ENCODE measurements at regions of chr3 and their contacts with region 1.

Region 1: GRCh38 chr3:26574766-26575165 is 47.8 kb upstream of the LRRC3B start:
- DNase-seq: no peak
- ATAC-seq: no peak

Region 2: GRCh38 chr3:26703519-26703918 is 128.8 kb after region 1 on chr3:
- intact Hi-C with region 1: loop called in 1 of 2 experiments (anchors 10 kb)
- DNase-seq: no peak
- ATAC-seq: no peak

Region 3: GRCh38 chr3:26799679-26800317 is 225.0 kb after region 1 on chr3:
- intact Hi-C with region 1: no loop called
- DNase-seq: no peak
- ATAC-seq: no peak

Region 4: GRCh38 chr3:26894443-26894842 is 319.7 kb after region 1 on chr3:
- intact Hi-C with region 1: no loop called
- DNase-seq: no peak
- ATAC-seq: no peak